ENCODE measurements at regions of chr17 and their contacts with region 1.

Region 1: DNA sequence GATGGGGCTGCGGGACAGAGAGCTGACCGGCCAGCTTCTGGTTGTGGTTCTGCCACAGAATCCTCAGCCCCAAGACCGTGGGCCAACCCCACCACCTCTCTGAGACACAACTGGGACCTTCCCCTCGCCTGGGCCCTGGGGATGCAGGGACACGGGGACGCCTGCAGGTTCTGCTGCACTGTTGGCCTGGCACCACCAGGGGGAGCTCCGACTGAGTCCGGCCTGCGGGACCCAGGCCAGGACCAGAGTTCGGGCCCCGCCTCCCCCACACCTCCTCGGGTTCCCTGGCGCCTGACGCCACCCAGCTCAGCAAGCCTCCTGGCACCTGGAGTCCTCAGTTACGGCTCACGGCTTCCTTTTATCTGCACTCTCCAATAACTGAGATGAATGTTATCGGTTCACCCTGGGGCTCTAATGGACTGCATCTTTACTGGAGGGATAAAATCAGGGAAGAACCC is 27.3 kb downstream of the TBC1D16 start:
- DNase-seq: peak; percentile 79
- H3K4me3 Mint-ChIP-seq: no peak overlapping the region
- H3K27ac Mint-ChIP-seq: no peak overlapping the region
- H3K4me1 Mint-ChIP-seq: peaks cover 5% of the 10 kb centered on the region
- H3K27me3 Mint-ChIP-seq: no peaks in the 10 kb centered on the region

Region 2: DNA sequence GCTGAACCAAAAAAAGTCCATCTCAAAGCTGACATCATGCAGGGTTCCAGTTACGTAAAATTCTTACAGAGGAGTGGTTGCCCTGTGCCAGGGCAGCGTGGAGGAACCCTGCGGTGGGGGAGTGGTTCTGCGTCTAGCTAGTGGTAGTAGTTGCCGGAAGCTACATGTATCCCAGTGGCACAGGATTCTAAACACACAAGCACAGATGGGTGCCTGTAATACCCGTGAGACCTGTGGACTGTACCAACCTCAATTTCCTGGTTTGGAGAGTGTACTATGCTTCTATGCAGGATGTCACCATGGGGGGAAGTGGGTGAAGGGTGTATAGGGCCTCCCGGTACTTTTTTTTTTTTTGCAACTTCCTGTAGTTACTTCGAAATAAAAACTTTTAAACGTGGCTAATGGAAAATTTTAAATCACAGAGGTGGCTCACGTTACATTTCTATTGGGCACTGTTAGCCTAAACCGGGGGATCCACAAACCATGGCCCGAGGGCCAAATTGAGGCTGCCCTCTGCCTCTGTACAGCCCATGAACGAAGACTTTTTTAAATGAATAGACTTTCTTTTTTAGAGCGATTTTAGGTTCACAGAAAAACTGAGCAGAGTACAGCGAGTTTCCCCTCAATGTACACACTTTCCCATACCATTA is 11.3 kb before region 1 on chr17:
- CTCF ChIA-PET with region 1: interaction called, 11 read pairs
- POLR2A ChIA-PET with region 1: no interaction called
- DNase-seq: peak; percentile 90
- H3K4me3 Mint-ChIP-seq: peak overlapping the region; percentile 55
- H3K27ac Mint-ChIP-seq: peak overlapping the region; percentile 98
- H3K4me1 Mint-ChIP-seq: peaks cover 56% of the 10 kb centered on the region
- H3K27me3 Mint-ChIP-seq: no peaks in the 10 kb centered on the region

Region 3: GRCh38 chr17:80055597-80055996 is 47.2 kb after region 1 on chr17:
- CTCF ChIA-PET with region 1: no interaction called
- POLR2A ChIA-PET with region 1: no interaction called
- DNase-seq: no peak
- H3K4me3 Mint-ChIP-seq: no peak overlapping the region
- H3K27ac Mint-ChIP-seq: no peak overlapping the region
- H3K4me1 Mint-ChIP-seq: no peaks in the 10 kb centered on the region
- H3K27me3 Mint-ChIP-seq: peaks cover 4% of the 10 kb centered on the region